IMR-90 (cell line): ENCODE measurements at regions of chr3 and their contacts with region 1.

Region 1: GRCh38 chr3:179158336-179159039 is 10.3 kb downstream of the PIK3CA start:
- DNase-seq: no peak
- ATAC-seq: no peak
- H3K4me3 ChIP-seq: no peak overlapping the region
- H3K27ac ChIP-seq: no peak overlapping the region
- H3K4me1 ChIP-seq: 0 out of 2 replicates have a peak, but pooled peaks cover 1% of the 10 kb centered on the region
- H3K27me3 ChIP-seq: no peaks in the 10 kb centered on the region
- CTCF ChIP-seq: no peak
- POLR2A ChIP-seq: no peak
- RAD21 ChIP-seq: no peak

Region 2: GRCh38 chr3:178562143-178562946 is 596.1 kb before region 1 on chr3:
- CTCF ChIA-PET with region 1: no interaction called
- POLR2A ChIA-PET with region 1: no interaction called
- dilution Hi-C with region 1: no loop called
- in situ Hi-C with region 1: no loop called
- intact Hi-C with region 1: no loop called
- DNase-seq: no peak
- ATAC-seq: no peak
- H3K4me3 ChIP-seq: no peak overlapping the region
- H3K27ac ChIP-seq: no peak overlapping the region
- H3K4me1 ChIP-seq: no peaks in the 10 kb centered on the region
- H3K27me3 ChIP-seq: no peaks in the 10 kb centered on the region
- CTCF ChIP-seq: no peak
- POLR2A ChIP-seq: no peak
- RAD21 ChIP-seq: no peak

Region 3: DNA sequence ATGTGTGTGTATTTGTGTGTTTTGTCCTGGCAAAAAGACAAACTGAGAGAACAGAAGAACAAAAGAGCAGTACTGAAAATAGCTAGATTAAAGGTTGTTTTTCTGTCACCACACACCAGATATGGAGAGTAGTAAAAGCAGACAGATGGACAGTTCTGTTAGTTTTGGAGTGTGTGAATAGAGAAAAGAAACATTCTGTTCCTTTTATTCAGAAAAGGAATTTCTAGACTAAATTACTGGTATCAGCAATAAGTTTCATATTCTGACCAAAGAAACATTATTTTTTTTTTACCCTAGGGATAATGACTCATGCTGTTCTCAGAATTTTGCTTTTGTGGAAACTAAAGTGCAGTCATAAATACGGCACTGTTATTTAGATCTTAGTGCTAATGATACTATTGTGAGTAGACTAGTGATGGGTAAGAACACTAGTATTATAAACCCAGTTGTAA is 22.6 kb after region 1 on chr3:
- CTCF ChIA-PET with region 1: no interaction called
- POLR2A ChIA-PET with region 1: no interaction called
- dilution Hi-C with region 1: no loop called
- in situ Hi-C with region 1: no loop called
- intact Hi-C with region 1: loop called (anchors 2 kb)
- DNase-seq: peak; percentile 63
- ATAC-seq: peak; percentile 64
- H3K4me3 ChIP-seq: no peak overlapping the region
- H3K27ac ChIP-seq: no peak overlapping the region
- H3K4me1 ChIP-seq: peaks cover 8% of the 10 kb centered on the region
- H3K27me3 ChIP-seq: no peaks in the 10 kb centered on the region
- CTCF ChIP-seq: no peak
- POLR2A ChIP-seq: no peak
- RAD21 ChIP-seq: no peak

Region 4: DNA sequence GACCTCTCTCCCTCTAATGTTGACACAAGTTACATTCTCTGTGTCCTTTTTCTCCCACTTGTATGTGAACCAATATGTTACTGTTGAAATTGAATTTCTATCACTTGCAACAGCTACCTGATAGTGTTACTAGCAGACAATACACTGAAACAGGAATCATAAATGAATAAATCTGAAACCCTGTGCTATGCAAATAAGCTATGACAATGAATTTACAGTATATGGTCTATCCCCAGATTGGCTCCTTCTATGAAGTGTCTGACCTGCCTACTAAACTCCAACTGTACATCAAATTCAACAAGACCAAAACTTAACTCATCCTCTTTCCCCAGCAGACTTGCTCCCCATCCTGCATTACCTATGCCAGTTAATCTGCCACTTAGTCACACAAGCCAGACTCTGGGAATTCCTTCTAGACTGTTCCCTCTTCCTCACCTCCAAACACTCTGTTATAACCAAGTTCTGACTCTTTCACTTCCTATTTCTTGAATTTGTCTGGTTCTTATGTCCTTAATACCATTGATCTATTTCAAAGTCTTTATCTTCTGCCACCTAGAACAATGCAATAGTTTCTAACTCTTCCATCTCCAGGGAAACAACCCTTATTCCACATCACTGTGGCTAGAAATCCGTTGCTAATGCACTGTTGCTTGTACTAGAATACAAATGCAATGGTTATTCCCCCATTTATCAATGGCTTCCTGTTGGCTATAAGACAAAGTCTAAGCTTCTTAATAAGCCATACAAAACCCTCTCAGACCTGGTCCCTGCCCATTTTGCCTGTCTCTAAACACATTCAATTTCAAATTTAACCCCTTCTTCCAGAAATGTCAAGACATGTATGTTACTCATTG is 151.0 kb after region 1 on chr3:
- CTCF ChIA-PET with region 1: no interaction called
- POLR2A ChIA-PET with region 1: interaction called, 21 read pairs
- dilution Hi-C with region 1: no loop called
- in situ Hi-C with region 1: no loop called
- intact Hi-C with region 1: no loop called
- DNase-seq: no peak
- ATAC-seq: no peak
- H3K4me3 ChIP-seq: no peak overlapping the region
- H3K27ac ChIP-seq: no peak overlapping the region
- H3K4me1 ChIP-seq: no peaks in the 10 kb centered on the region
- H3K27me3 ChIP-seq: no peaks in the 10 kb centered on the region
- CTCF ChIP-seq: no peak
- POLR2A ChIP-seq: no peak
- RAD21 ChIP-seq: no peak

Region 5: DNA sequence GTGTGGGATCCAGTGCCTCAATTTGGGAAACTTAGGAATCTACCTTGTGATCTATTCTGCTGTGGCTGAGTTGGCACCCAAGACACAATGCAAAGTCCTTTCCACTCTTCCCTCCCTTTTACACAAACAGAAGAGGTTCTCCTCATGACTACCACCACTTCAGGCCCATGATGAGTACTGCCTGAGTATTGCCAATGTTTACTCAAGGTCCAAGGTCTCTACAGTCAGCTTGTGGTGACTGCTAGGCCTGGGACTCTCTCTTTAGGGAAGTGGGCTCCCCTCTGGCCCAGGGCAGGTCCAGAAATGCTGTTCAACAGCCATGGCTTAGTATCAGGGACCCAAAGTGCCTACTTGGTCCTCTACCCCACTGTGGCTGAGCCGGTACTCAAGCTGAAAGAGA is 935.0 kb after region 1 on chr3:
- CTCF ChIA-PET with region 1: no interaction called
- POLR2A ChIA-PET with region 1: no interaction called
- dilution Hi-C with region 1: no loop called
- in situ Hi-C with region 1: no loop called
- intact Hi-C with region 1: no loop called
- DNase-seq: no peak
- ATAC-seq: no peak
- H3K4me3 ChIP-seq: no peak overlapping the region
- H3K27ac ChIP-seq: no peak overlapping the region
- H3K4me1 ChIP-seq: no peaks in the 10 kb centered on the region
- H3K27me3 ChIP-seq: no peaks in the 10 kb centered on the region
- CTCF ChIP-seq: no peak
- POLR2A ChIP-seq: no peak
- RAD21 ChIP-seq: no peak